T-cell (primary cell): ENCODE measurements at regions of chr12 and their contacts with region 1.

Region 1: DNA sequence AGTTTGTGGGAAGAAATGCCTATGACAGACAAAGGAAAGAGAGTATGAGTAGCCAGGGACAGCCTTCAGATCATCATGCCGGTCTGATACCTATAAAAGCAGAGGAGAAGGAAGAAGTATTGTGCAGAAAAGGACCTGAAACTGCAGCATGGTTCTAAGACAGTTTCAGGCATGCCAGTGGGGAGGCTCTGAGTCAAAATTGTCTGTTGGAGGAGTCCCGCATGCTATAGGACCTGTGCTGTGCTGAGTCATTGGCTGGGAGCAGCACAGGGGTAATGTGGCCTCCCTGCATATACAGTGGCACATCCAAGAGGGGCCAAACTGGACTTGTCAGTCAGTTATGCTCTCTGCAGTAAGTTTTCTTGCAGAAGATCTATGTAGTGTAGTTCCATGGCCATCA is 40.7 kb downstream of the NEUROD4 start:
- DNase-seq: no peak
- ATAC-seq: no peak
- H3K4me3 ChIP-seq: no peak overlapping the region
- H3K4me3 Mint-ChIP-seq: no peak overlapping the region
- H3K27ac ChIP-seq: no peak overlapping the region
- H3K27ac Mint-ChIP-seq: no peak overlapping the region
- H3K4me1 ChIP-seq: no peaks in the 10 kb centered on the region
- H3K4me1 Mint-ChIP-seq: peaks cover 0 to 2% (median 0%) of the 10 kb centered on the region in 3 donors
- H3K27me3 ChIP-seq: peaks cover 0 to 1% of the 10 kb centered on the region in 2 experiments
- H3K27me3 Mint-ChIP-seq: peaks cover 3 to 13% of the 10 kb centered on the region in 2 donors

Region 2: GRCh38 chr12:53631721-53632120 is 1428.7 kb before region 1 on chr12:
- CTCF ChIA-PET with region 1: no interaction called
- POLR2A ChIA-PET with region 1: no interaction called
- DNase-seq: no peak
- ATAC-seq: no peak
- H3K4me3 ChIP-seq: no peak overlapping the region
- H3K4me3 Mint-ChIP-seq: no peak overlapping the region
- H3K27ac ChIP-seq: no peak overlapping the region
- H3K27ac Mint-ChIP-seq: no peak overlapping the region
- H3K4me1 ChIP-seq: peaks cover 0 to 2% of the 10 kb centered on the region in 2 experiments
- H3K4me1 Mint-ChIP-seq: peaks cover 5 to 6% (median 5%) of the 10 kb centered on the region in 3 donors
- H3K27me3 ChIP-seq: peaks cover 0 to 5% of the 10 kb centered on the region in 2 experiments
- H3K27me3 Mint-ChIP-seq: no peaks in the 10 kb centered on the region

Region 3: GRCh38 chr12:54998958-54999510 is 61.4 kb before region 1 on chr12:
- CTCF ChIA-PET with region 1: interaction called in 1 of 2 experiments, 10 read pairs
- POLR2A ChIA-PET with region 1: interaction called in 1 of 2 experiments, 3 read pairs
- DNase-seq: no peak
- ATAC-seq: no peak
- H3K4me3 ChIP-seq: no peak overlapping the region
- H3K4me3 Mint-ChIP-seq: no peak overlapping the region
- H3K27ac ChIP-seq: no peak overlapping the region
- H3K27ac Mint-ChIP-seq: peak overlapping the region in 1 of 2 donors; percentile 25
- H3K4me1 ChIP-seq: peaks cover 5% of the 10 kb centered on the region in 2 experiments
- H3K4me1 Mint-ChIP-seq: peaks cover 14 to 24% (median 17%) of the 10 kb centered on the region in 3 donors
- H3K27me3 ChIP-seq: no peaks in the 10 kb centered on the region
- H3K27me3 Mint-ChIP-seq: no peaks in the 10 kb centered on the region

Region 4: DNA sequence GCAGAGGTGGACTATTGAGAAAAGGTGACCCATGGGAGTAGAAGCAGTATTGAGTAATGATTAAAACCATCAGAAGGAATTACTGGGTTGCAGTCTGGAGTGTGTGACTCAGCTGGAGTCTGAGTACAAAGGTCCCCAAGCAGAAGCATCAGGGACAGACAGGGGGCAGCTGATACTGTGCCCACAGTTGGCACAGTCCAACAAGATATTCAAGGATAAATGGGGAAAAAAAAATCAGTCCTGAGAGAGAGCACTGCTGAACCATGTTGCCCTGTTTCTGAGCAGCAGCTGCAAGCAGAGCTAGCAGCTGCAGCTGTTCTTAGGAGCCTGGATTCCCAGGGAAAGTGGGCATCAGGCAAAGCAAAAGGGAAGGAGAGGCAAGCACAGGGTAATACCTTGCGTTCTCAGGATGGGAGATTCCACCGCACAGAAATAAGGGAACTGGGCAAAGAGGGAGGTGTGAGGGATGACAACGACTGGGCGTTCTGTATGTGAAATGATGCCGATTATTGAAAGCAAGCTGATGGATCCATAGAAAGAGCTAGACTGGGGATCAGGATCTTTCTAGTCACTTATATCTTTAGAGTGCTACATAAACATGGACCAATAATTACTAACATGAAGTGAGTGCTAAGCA is 23.0 kb before region 1 on chr12:
- CTCF ChIA-PET with region 1: no interaction called
- POLR2A ChIA-PET with region 1: no interaction called
- DNase-seq: no peak
- ATAC-seq: no peak
- H3K4me3 ChIP-seq: no peak overlapping the region
- H3K4me3 Mint-ChIP-seq: peak overlapping the region in 1 of 3 donors; percentile 54
- H3K27ac ChIP-seq: no peak overlapping the region
- H3K27ac Mint-ChIP-seq: peak overlapping the region; percentile 53 to 72
- H3K4me1 ChIP-seq: peaks cover 18 to 23% of the 10 kb centered on the region in 2 experiments
- H3K4me1 Mint-ChIP-seq: peaks cover 46 to 63% (median 52%) of the 10 kb centered on the region in 3 donors
- H3K27me3 ChIP-seq: peaks cover 0 to 4% of the 10 kb centered on the region in 2 experiments
- H3K27me3 Mint-ChIP-seq: peaks cover 0 to 3% of the 10 kb centered on the region in 2 donors